CD8-positive, alpha-beta T cell (primary cell): ENCODE measurements at regions of chr7 and their contacts with region 1.

Region 1: DNA sequence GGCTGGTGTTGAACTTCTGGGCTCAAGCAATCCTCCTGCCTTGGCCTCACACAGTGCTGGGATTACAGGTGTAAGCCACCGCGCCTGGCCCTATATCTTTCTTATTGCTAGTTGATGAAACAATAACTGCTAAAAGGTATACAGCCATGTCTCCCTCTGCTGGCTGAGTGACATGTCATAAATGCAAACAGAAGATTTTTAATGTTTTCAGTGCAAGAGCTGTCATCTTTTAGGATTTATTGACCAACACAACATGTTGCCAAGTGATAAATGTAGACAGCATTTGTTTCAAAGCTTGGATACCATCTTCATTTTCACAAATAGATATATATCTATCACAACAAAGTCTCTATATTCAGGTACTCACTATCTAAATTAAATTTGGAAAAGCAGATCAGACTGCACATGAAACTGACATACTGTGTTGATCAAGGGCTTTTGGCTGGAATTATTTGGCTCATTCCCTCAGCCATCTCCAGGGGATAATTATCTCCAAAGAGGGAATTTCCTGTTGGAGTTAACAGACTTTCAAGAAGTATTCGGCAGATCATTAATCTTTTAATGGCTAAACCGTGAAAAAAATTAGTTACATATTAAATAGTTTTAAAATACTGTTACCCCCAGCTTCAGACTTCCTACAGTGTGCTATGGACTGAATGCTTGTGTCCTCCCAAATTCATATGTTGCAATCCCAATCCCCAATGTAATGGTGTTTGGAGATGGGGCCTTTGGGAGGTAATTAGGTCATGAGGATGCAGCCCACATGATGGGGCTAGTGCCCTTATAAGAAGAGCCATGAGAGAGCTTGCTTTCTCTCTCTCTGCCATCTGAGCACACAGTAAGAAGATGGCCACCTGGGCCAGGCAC is 41.3 kb upstream of the SRPK2 start:
- DNase-seq: peak; percentile 12 to 75 (median 53)
- ATAC-seq: peak; percentile 61
- H3K4me3 ChIP-seq: no peak overlapping the region
- H3K4me3 Mint-ChIP-seq: no peak overlapping the region
- H3K27ac ChIP-seq: no peak overlapping the region
- H3K27ac Mint-ChIP-seq: no peak overlapping the region
- H3K4me1 ChIP-seq: no peaks in the 10 kb centered on the region
- H3K4me1 Mint-ChIP-seq: no peaks in the 10 kb centered on the region
- H3K27me3 ChIP-seq: no peaks in the 10 kb centered on the region
- H3K27me3 Mint-ChIP-seq: no peaks in the 10 kb centered on the region
- CTCF ChIP-seq: peak; percentile 45

Region 2: DNA sequence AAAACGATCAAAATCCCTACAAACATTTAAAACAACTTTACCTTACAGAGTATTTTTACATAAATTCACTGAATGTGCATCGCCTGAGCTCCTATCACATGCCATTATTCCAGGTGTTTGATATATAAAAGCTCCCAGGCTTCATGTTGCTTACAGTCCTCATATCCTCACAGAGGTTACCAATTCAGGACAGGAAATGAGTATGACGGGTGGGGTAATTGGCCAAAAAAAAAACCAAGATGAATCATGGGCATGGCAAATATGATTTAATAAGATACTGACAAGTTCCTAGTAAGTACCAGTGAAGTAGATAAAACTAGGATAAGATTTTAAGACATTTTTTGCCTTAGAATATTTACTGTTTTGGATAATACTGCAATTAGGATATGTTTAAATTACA is 280.2 kb before region 1 on chr7:
- CTCF ChIA-PET with region 1: interaction called, 13 read pairs
- POLR2A ChIA-PET with region 1: no interaction called
- intact Hi-C with region 1: loop called (anchors 1 to 2 kb)
- DNase-seq: no peak
- ATAC-seq: no peak
- H3K4me3 ChIP-seq: no peak overlapping the region
- H3K4me3 Mint-ChIP-seq: no peak overlapping the region
- H3K27ac ChIP-seq: no peak overlapping the region
- H3K27ac Mint-ChIP-seq: no peak overlapping the region
- H3K4me1 ChIP-seq: no peaks in the 10 kb centered on the region
- H3K4me1 Mint-ChIP-seq: peaks cover 2% of the 10 kb centered on the region
- H3K27me3 ChIP-seq: no peaks in the 10 kb centered on the region
- H3K27me3 Mint-ChIP-seq: no peaks in the 10 kb centered on the region
- CTCF ChIP-seq: no peak

Region 3: DNA sequence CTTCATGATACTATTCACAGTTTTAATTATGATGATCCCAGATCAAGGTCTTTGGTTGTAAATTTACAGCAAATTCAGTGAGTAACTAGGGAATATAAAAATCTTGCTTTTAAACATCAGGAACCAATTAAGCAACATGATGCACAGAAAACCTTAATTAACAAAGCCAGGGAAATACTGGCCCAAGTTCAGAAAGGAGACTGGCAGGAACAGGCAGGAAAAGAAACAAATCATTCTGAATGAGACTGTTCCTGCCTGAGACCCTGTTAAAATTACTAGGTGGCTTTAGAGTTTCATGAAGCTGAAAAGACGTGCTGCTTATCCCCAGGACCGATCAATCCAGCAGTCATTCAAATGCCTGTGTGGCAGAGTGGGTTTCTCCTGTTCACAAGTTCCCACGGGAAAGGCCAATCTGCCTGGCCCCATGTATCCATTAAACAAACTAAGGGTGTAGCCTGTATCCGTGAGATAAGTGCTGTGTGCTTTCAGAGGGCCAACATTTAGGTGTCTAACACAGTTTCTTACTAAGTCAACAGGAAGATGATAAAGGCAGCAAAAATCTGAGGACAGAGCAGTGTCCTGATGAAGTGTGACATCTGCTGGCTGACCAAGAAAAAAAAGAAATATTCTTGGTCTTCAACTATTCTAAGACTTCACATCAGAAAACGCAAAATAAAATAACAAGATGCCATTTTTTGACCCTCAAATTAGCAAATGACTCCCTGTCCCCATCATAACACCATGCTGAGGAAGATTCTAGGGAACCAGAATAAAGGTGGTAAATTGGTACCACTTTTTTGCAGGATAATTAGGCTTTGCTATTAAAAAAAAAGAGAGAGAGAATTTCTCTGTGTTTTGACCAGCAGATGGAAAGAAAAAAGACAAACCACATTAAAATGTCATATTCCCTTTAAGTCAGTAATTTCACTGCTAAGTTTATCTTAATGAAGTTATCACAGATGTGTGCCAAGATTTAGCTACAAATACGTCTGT is 57.9 kb after region 1 on chr7:
- CTCF ChIA-PET with region 1: interaction called, 6 read pairs
- POLR2A ChIA-PET with region 1: no interaction called
- intact Hi-C with region 1: loop called in 1 of 2 experiments (anchors 1 kb)
- DNase-seq: peak in 3 of 9 experiments; percentile 39 to 53 (median 50)
- ATAC-seq: no peak
- H3K4me3 ChIP-seq: no peak overlapping the region
- H3K4me3 Mint-ChIP-seq: no peak overlapping the region
- H3K27ac ChIP-seq: no peak overlapping the region
- H3K27ac Mint-ChIP-seq: no peak overlapping the region
- H3K4me1 ChIP-seq: no peaks in the 10 kb centered on the region
- H3K4me1 Mint-ChIP-seq: peaks cover 4% of the 10 kb centered on the region
- H3K27me3 ChIP-seq: no peaks in the 10 kb centered on the region
- H3K27me3 Mint-ChIP-seq: no peaks in the 10 kb centered on the region
- CTCF ChIP-seq: peak; percentile 22

Region 4: GRCh38 chr7:105589356-105590077 is 159.5 kb after region 1 on chr7:
- CTCF ChIA-PET with region 1: interaction called, 5 read pairs
- POLR2A ChIA-PET with region 1: no interaction called
- intact Hi-C with region 1: loop called in 1 of 2 experiments (anchors 1 kb)
- DNase-seq: peak; percentile 6 to 68 (median 44)
- ATAC-seq: peak; percentile 89
- H3K4me3 ChIP-seq: no peak overlapping the region
- H3K4me3 Mint-ChIP-seq: no peak overlapping the region
- H3K27ac ChIP-seq: no peak overlapping the region
- H3K27ac Mint-ChIP-seq: no peak overlapping the region
- H3K4me1 ChIP-seq: no peaks in the 10 kb centered on the region
- H3K4me1 Mint-ChIP-seq: peaks cover 11% of the 10 kb centered on the region
- H3K27me3 ChIP-seq: no peaks in the 10 kb centered on the region
- H3K27me3 Mint-ChIP-seq: no peaks in the 10 kb centered on the region
- CTCF ChIP-seq: peak; percentile 56